HEK293 (cell line): ENCODE measurements at regions of chr19 and their contacts with region 1.

Region 1: GRCh38 chr19:29873024-29873800 is 61.4 kb downstream of the CCNE1 start:
- H3K4me3 ChIP-seq: peak overlapping the region; percentile 47
- H3K27ac ChIP-seq: peak overlapping the region; percentile 76; the same call in 1 of the 2 replicates
- H3K4me1 ChIP-seq: peaks cover 12% of the 10 kb centered on the region
- CTCF ChIP-seq: peak; percentile 86

Region 2: DNA sequence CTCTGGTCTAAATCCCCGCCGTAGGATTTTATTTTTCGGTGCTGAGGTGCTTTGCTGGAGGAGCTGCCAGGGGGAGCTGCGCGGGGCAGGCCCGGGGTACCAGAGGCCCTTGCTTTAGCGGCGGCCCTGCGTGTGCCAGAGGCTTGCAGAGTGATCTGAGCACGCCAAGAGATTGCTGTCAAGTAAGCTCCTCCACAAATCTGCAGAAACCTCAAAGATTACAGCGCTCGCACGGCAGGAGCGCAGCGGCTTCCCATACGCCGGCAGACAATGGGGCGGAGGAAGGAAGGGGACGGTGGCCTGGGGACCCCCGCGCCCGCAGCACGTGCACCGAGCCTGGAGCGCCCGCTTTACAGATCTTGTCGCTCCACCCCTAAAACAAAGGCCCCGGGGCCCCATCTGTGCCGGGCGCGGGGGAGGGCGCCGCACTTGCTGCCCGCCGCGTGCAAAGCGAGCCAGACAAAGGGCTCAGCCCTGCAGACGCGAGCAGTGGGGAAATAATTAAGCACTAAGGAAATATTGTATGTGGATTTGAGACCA is 149.0 kb before region 1 on chr19:
- CTCF ChIA-PET with region 1: interaction called, 102 read pairs
- POLR2A ChIA-PET with region 1: no interaction called
- H3K4me3 ChIP-seq: no peak overlapping the region
- H3K27ac ChIP-seq: no peak overlapping the region
- H3K4me1 ChIP-seq: no peaks in the 10 kb centered on the region; the same call in 1 of the 2 replicates
- CTCF ChIP-seq: no peak

Region 3: DNA sequence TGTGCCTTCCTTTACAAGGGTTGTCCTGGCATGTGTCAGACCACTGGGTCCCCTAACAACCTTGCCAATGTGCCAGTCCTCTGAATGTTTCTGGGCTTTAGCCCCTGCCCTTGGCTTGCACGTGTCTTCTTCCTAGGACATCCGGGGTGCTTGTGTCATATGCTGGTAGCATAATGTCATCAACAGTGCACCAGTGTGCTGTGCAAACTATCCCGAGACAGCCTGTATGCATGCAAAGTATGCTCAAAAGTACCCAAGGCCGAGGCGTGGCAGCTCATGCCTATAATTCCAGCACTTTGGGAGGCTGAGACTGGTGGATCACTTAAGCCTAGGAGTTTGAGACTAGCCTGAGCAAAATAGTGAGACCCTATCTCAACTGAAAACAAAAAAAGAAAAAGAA is 137.4 kb before region 1 on chr19:
- CTCF ChIA-PET with region 1: interaction called, 102 read pairs
- POLR2A ChIA-PET with region 1: interaction called, 7 read pairs
- H3K4me3 ChIP-seq: no peak overlapping the region
- H3K27ac ChIP-seq: no peak overlapping the region
- H3K4me1 ChIP-seq: no peaks in the 10 kb centered on the region
- CTCF ChIP-seq: no peak

Region 4: DNA sequence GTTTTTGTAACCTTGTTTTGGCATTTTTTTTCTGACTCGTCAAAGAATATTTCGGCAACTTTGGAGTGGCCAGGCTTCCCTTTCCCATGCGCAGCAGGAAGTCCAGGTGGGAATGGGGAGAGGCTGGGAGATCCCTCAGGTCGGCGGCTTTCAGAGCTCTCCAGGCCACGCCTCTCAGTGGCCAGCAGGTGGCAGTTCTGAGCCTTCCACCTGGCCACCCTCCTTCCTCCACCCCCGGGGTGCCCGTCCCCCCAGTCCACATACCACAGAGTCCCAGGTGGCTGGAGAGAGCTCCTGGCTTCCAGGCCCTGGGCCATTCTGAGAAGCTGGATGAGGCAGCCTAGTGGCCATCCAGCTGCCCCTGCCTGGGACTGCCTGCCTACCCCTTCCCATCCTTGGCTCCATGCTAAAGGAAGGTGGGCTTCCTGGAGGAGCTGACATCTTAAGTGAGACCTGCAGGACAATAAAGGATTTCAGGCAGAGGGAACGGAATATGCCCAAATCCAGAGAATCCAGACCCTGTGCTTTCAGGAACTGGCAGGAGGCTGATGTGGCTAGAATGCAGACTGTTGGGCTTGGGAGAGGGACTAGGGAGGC is 15.1 kb before region 1 on chr19:
- CTCF ChIA-PET with region 1: interaction called, 177 read pairs
- POLR2A ChIA-PET with region 1: interaction called, 3 read pairs
- H3K4me3 ChIP-seq: no peak overlapping the region
- H3K27ac ChIP-seq: no peak overlapping the region
- H3K4me1 ChIP-seq: peaks cover 10% of the 10 kb centered on the region
- CTCF ChIP-seq: peak; percentile 86

Region 5: DNA sequence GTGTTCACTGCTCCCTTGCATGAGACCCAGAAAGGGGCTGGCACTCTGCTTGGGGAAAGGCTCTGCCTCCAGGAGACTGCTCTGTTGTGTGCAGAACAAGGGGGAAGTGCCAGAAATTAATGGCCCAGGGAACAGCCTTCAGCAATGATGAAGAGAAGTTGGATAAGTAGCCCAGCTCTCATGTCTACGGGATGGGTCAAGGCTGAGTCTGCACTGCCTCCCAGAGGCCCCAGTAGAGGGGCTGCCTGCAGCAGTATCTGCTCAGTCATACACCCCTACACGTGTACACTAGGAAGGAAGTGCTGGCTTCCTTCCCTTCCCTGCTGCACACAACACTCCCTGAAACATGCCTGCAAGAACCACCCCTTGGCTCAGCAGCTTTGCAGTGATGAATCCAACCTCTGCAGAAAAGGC is 14.2 kb after region 1 on chr19:
- CTCF ChIA-PET with region 1: interaction called, 10 read pairs
- POLR2A ChIA-PET with region 1: no interaction called
- H3K4me3 ChIP-seq: no peak overlapping the region
- H3K27ac ChIP-seq: no peak overlapping the region
- H3K4me1 ChIP-seq: no peaks in the 10 kb centered on the region
- CTCF ChIP-seq: peak; percentile 56

Region 6: GRCh38 chr19:30011051-30011578 is 137.9 kb after region 1 on chr19:
- CTCF ChIA-PET with region 1: no interaction called
- POLR2A ChIA-PET with region 1: no interaction called
- H3K4me3 ChIP-seq: no peak overlapping the region
- H3K27ac ChIP-seq: no peak overlapping the region
- H3K4me1 ChIP-seq: peaks cover 6% of the 10 kb centered on the region; the same call in 1 of the 2 replicates
- CTCF ChIP-seq: no peak; the same call in 1 of the 2 replicates